ENCODE measurements at regions of chr1 and their contacts with region 1.

Region 1: GRCh38 chr1:202571347-202572339 is 138.6 kb downstream of the SYT2 start:
- DNase-seq: no peak
- H3K4me3 Mint-ChIP-seq: no peak overlapping the region
- H3K27ac Mint-ChIP-seq: no peak overlapping the region
- H3K4me1 Mint-ChIP-seq: peaks cover 7% of the 10 kb centered on the region
- H3K27me3 Mint-ChIP-seq: no peaks in the 10 kb centered on the region

Region 2: DNA sequence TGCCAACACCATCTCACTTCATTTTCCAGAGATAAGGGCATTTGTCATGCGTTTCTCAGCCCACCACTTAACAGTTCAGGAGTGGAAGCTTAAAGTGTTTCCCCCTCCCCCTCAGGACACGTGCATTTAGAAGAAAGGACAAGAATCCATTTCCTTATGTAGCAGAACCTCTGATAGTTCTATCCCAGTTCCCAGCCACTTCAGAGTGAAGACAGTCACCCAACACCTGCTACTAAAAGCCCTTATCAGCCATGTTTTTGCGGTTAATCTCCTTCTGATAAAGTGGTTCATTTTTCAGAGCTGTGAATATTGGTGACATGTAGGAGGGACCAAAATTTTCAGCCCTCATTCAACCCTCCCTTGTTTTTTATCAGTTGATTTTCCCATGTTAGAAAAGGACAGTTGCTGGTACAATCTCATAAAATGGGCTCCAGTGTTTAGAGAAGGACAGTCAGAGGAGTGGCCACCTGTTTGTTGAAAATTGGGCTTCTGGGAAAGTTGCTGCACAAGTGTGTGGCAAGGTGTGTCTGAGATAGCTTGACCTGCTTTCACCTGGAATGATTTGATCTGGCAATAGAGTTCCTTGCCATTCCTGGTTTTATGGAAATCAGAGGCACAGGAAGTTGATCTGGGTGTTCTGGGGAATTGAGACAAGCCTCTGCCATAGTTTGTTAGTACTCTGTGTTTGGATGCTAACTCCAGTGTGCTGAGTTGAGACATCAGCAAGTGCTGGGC is 109.1 kb before region 1 on chr1:
- intact Hi-C with region 1: loop called (anchors 10 kb)
- DNase-seq: no peak
- H3K4me3 Mint-ChIP-seq: no peak overlapping the region
- H3K27ac Mint-ChIP-seq: no peak overlapping the region
- H3K4me1 Mint-ChIP-seq: no peaks in the 10 kb centered on the region
- H3K27me3 Mint-ChIP-seq: peaks cover 7% of the 10 kb centered on the region

Region 3: GRCh38 chr1:202501281-202501680 is 70.4 kb before region 1 on chr1:
- intact Hi-C with region 1: loop called (anchors 5 kb)
- DNase-seq: no peak
- H3K4me3 Mint-ChIP-seq: no peak overlapping the region
- H3K27ac Mint-ChIP-seq: no peak overlapping the region
- H3K4me1 Mint-ChIP-seq: no peaks in the 10 kb centered on the region
- H3K27me3 Mint-ChIP-seq: no peaks in the 10 kb centered on the region

Region 4: DNA sequence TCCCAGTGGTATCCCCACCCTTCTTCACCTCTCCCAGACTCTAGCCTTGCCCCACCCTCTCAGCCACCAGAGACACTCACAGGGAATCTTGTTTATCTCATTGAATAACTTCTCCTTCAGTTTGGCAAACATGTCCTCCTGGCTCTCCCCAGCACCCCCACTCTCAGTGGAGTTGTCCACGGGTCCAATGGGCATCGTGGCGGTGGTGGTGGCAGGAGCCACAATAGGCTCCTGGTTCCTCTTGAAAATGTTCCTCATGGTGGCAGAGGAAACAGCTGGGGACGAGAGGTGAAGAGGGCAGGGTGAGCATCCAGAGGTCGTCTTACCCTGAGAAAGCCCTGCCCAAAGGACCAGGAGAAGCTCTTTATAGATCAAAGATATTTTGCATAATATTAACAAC is 33.9 kb after region 1 on chr1:
- intact Hi-C with region 1: no loop called
- DNase-seq: no peak
- H3K4me3 Mint-ChIP-seq: no peak overlapping the region
- H3K27ac Mint-ChIP-seq: no peak overlapping the region
- H3K4me1 Mint-ChIP-seq: no peaks in the 10 kb centered on the region
- H3K27me3 Mint-ChIP-seq: no peaks in the 10 kb centered on the region

Measured in activated T-helper 2 cell treated with anti-CD3 and anti-CD28 coated beads, Interferon-gamma antibody, Interleukin-2, Interleukin-4, amounts not matched to agents 10 μg/mL and 5 μg/mL and 100 μg/mL, durations not matched to agents 14 hours and 24 hours and 36 hours (primary cell).